GM10248 (cell line): ENCODE measurements at regions of chr7 and their contacts with region 1.

Region 1: GRCh38 chr7:29091715-29092114 is 54.6 kb downstream of the CPVL start:
- DNase-seq: peak; percentile 81
- CTCF ChIP-seq: no peak

Region 2: DNA sequence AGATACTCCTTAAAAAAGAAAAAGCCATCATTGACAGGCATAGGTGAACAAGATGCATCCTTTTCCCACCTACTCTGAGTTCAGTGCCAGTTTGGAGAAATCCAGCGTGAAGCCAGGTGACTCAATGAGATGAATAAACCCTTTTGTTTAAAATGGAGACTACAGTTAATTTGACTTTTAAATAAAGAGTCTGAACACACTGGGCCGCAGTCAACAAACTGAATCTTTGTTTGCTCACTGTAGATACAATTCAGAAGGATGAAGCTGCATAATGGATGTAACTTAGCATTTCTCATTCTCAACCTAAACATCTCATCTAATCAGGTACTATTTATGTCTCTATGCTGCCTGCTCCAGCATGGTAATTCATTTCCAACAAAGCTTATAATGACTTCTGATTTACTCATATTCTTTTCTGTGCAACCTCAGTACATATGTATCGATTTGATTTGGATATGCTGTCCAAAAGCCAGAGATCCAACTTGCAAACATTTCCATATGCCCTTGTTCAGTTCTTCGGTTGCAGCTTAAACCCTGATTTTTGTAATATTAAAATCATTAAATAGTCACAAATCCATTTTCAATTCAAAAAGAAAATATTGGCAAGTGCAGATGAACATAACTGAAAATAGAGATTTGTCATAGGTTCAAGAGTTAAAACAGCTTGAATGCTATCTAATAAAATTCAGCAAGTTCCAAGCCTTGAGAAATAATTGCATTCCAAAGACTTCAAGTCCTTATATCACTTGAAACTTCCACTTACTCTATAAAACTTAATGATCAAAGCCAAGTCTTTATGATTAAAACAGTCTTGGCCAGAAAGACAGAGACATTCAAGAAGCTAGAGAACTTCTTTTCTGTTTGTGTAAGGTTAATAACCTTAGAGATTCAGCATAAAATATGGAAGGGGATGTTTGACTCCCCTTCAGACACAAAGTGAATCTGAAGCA is 13.1 kb before region 1 on chr7:
- CTCF ChIA-PET with region 1: interaction called, 13 read pairs
- POLR2A ChIA-PET with region 1: no interaction called
- DNase-seq: no peak
- CTCF ChIP-seq: no peak

Region 3: GRCh38 chr7:29105752-29106668 is 14.3 kb after region 1 on chr7:
- CTCF ChIA-PET with region 1: interaction called, 26 read pairs
- POLR2A ChIA-PET with region 1: no interaction called
- DNase-seq: peak; percentile 28
- CTCF ChIP-seq: peak; percentile 84

Region 4: GRCh38 chr7:29139191-29139590 is 47.5 kb after region 1 on chr7:
- CTCF ChIA-PET with region 1: no interaction called
- POLR2A ChIA-PET with region 1: no interaction called
- DNase-seq: no peak
- CTCF ChIP-seq: no peak